Breast epithelium (tissue), 4 donors: ENCODE measurements at regions of chr7 and their contacts with region 1.

Region 1: DNA sequence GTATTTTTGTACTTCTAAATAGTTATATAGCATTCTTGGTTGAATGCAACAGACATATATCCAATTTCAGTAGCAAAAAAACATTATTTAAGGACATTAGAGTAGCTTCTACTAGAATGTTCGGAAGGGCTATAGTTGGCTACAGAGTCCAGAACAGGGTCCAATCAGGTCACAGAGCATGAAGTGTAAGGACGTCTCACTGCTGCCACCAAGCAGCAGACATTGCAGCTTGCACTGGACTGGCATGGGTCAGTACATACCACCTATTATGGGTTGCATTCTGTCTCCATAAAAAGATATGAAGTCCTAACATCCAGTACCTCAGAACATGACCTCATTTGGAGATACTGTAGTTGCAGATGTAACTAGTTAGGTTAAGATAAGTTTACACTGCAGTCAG is 87.3 kb downstream of the LHFPL3 start:
- DNase-seq: no peak
- H3K4me3 ChIP-seq: no peak overlapping the region
- H3K27ac ChIP-seq: no peak overlapping the region
- H3K4me1 ChIP-seq: no peaks in the 10 kb centered on the region
- H3K27me3 ChIP-seq: no peaks in the 10 kb centered on the region
- CTCF ChIP-seq: no peak
- POLR2A ChIP-seq: no peak

Region 2: GRCh38 chr7:104231054-104232046 is 184.3 kb before region 1 on chr7:
- intact Hi-C with region 1: loop called (anchors 5 kb)
- DNase-seq: peak in 1 of 2 donors; percentile 18
- H3K4me3 ChIP-seq: peak overlapping the region in 1 of 3 donors; percentile 35
- H3K27ac ChIP-seq: no peak overlapping the region
- H3K4me1 ChIP-seq: no peaks in the 10 kb centered on the region
- H3K27me3 ChIP-seq: peaks cover 0 to 3% of the 10 kb centered on the region in 2 donors
- CTCF ChIP-seq: peak in 2 of 3 donors; percentile 60 to 68
- POLR2A ChIP-seq: no peak